ENCODE measurements at regions of chr6 and their contacts with region 1.

Region 1: GRCh38 chr6:30238174-30238795 is 25.1 kb upstream of the TRIM26 start:
- DNase-seq: peak; percentile 66

Region 2: DNA sequence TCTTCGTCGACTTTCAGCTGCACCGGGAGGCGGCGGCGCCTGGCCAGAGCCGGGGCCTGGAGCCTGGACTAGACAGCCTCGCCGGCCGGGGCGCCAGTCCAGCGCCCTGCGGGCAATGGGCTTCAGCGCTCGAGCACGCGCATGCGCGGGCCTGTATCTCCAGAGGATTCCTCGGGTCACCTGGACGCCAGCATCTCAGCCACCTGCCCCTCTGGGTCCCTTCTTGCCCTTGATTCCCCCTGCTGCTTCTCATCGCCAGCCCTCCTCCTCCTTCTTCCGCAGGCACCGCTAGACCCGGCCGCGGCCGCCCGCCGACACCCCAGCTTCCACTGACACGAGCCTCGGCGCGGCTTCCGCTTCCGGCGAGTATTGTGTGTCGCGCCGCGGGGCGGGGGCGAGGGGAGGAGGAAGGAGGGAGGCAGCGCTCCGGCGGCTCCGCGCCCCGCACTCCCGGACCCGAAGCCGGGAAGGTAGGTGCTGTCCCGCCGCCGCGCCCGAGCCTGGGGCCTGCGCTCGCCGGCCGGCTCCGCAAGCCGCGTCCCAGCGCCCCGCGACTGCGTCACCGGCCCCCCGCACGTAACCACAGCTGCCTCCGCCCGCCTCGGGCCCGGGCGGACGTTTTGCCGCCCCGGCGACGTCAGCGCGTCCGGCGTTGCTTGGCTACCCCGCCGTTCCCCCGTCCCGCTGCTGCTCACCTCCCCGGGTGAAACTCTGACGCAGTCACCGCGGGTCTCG is 88.4 kb after region 1 on chr6 and contains the start of gene TRIM39:
- in situ Hi-C with region 1: loop called (anchors 25 kb)
- DNase-seq: peak; percentile 77
- total RNA-seq, gene TRIM39: 8.2 and 9.1 TPM in 2 replicates

Region 3: GRCh38 chr6:30935018-30935417 is 696.7 kb after region 1 on chr6:
- in situ Hi-C with region 1: no loop called
- DNase-seq: peak; percentile 19